Activated T-helper 1 cell treated with anti-CD3 and anti-CD28 coated beads, Interleukin-12 subunit alpha, Interleukin-12 subunit beta, Interleukin-2, Interleukin-4 antibody, amounts not matched to agents 30 ng/mL and 10 ng/mL and 1 ng/mL, durations not matched to agents 14 hours and 24 hours and 36 hours (primary cell): ENCODE measurements at regions of chr16 and their contacts with region 1.

Region 1: DNA sequence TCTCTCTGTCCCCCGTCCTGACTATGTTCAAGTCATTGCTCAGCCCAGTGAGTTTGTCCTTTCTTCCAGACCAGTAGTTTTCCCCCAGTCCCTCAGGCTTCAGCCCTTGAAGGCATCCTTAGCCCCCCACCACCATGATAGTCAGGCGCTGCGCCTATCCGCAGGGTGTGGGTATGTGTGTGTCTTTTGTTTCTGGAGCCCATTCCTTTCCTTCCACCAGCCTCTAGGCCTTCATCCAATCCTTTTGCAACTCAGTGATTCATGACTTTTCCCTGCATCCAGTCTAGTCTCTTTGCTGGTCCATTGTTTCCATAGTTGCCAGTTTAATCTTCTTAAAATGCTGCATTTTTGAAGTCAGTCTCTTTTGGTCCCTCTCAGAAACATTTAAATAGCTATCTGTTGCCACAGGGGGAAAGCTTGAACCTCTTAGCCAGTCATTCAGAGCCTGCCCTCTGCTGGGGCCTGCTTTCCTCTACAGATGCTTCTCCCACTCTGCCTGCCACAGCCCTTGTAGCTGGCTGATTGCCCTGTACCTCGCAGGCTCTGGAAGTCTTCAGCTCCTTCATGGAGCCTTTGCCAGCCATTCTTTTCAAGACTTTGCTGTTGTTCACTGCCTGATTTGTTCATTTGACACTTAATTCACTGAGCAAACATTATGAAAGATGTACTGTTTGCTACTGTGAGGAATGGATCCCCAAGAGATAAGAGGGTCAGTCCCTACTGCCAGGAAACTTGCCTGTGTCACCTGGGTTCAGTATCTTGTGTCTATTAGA is 55.9 kb upstream of the ADCY7 start:
- DNase-seq: peak; percentile 52
- H3K4me3 Mint-ChIP-seq: no peak overlapping the region
- H3K27ac Mint-ChIP-seq: peak overlapping the region; percentile 71
- H3K4me1 Mint-ChIP-seq: peaks cover 29% of the 10 kb centered on the region
- H3K27me3 Mint-ChIP-seq: no peaks in the 10 kb centered on the region

Region 2: GRCh38 chr16:50065624-50066481 is 144.6 kb before region 1 on chr16 and contains the start of gene HEATR3:
- intact Hi-C with region 1: loop called (anchors 1 kb)
- DNase-seq: peak; percentile 93
- H3K4me3 Mint-ChIP-seq: peak within 1 kb of the TSS; percentile 85
- H3K27ac Mint-ChIP-seq: peak within 1 kb of the TSS; percentile 90
- H3K4me1 Mint-ChIP-seq: peaks cover 39% of the 10 kb centered on the region
- H3K27me3 Mint-ChIP-seq: no peaks in the 10 kb centered on the region
- total RNA-seq, gene HEATR3: 29.1 and 30.7 TPM in 2 replicates

Region 3: GRCh38 chr16:50195276-50195675 is 15.2 kb before region 1 on chr16:
- intact Hi-C with region 1: no loop called
- DNase-seq: no peak
- H3K4me3 Mint-ChIP-seq: no peak overlapping the region
- H3K27ac Mint-ChIP-seq: no peak overlapping the region
- H3K4me1 Mint-ChIP-seq: peaks cover 55% of the 10 kb centered on the region
- H3K27me3 Mint-ChIP-seq: no peaks in the 10 kb centered on the region

Region 4: GRCh38 chr16:50228364-50228868 is 18.0 kb after region 1 on chr16:
- intact Hi-C with region 1: no loop called
- DNase-seq: no peak
- H3K4me3 Mint-ChIP-seq: no peak overlapping the region
- H3K27ac Mint-ChIP-seq: no peak overlapping the region
- H3K4me1 Mint-ChIP-seq: peaks cover 13% of the 10 kb centered on the region
- H3K27me3 Mint-ChIP-seq: no peaks in the 10 kb centered on the region

Region 5: GRCh38 chr16:50273681-50274325 is 63.4 kb after region 1 on chr16:
- intact Hi-C with region 1: loop called (anchors 1 kb)
- DNase-seq: peak; percentile 20
- H3K4me3 Mint-ChIP-seq: peak overlapping the region; percentile 95
- H3K27ac Mint-ChIP-seq: peak overlapping the region; percentile 98
- H3K4me1 Mint-ChIP-seq: peaks cover 95% of the 10 kb centered on the region
- H3K27me3 Mint-ChIP-seq: no peaks in the 10 kb centered on the region

Region 6: DNA sequence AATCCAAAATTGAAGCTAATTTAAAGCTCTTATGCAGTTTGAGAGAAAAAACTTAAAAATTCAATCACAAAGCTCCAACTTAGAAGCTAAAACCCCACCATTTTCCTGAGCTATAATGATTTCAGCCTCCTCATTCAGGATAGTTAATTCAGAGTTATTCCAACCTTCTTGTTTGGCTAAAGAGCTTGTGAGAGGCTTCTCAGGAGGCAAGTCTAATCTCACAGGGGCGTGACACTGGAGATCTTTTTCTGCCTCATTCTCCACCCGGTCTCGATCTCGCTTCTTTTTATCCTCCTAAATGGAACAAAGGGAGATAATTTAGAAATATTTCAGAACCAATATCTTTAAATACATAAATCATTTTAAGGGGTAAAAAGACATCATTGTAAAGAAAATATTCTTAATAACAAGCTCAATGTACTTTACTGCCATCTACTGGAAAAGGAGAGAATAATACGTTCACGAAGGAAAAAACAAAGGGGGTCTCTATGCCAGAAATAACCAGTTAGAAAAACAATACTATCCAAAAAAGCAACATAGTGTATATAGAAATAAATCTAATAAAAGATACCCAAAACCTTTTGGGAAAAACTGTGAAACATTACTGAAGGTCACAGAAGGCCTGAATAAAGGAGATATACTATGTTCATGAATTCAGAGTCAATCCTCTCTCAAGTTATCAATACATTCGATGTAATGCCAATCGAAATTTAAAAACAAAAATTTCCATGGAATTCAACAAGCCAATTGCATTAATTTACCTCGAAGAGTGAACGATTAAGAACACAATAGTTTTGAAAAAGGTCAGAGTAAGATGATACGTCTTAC is 144.4 kb after region 1 on chr16:
- intact Hi-C with region 1: loop called (anchors 1 kb)
- DNase-seq: no peak
- H3K4me3 Mint-ChIP-seq: no peak overlapping the region
- H3K27ac Mint-ChIP-seq: no peak overlapping the region
- H3K4me1 Mint-ChIP-seq: peaks cover 29% of the 10 kb centered on the region
- H3K27me3 Mint-ChIP-seq: no peaks in the 10 kb centered on the region

Region 7: GRCh38 chr16:50627419-50627818 is 417.0 kb after region 1 on chr16:
- intact Hi-C with region 1: loop called (anchors 1 kb)
- DNase-seq: peak; percentile 5
- H3K4me3 Mint-ChIP-seq: no peak overlapping the region
- H3K27ac Mint-ChIP-seq: no peak overlapping the region
- H3K4me1 Mint-ChIP-seq: peaks cover 14% of the 10 kb centered on the region
- H3K27me3 Mint-ChIP-seq: no peaks in the 10 kb centered on the region

Region 8: GRCh38 chr16:50806099-50807062 is 595.9 kb after region 1 on chr16:
- intact Hi-C with region 1: loop called (anchors 1 kb)
- DNase-seq: peak; percentile 78
- H3K4me3 Mint-ChIP-seq: peak overlapping the region; percentile 66
- H3K27ac Mint-ChIP-seq: peak overlapping the region; percentile 30
- H3K4me1 Mint-ChIP-seq: peaks cover 9% of the 10 kb centered on the region
- H3K27me3 Mint-ChIP-seq: no peaks in the 10 kb centered on the region